ENCODE measurements at regions of chr3 and their contacts with region 1.

Region 1: DNA sequence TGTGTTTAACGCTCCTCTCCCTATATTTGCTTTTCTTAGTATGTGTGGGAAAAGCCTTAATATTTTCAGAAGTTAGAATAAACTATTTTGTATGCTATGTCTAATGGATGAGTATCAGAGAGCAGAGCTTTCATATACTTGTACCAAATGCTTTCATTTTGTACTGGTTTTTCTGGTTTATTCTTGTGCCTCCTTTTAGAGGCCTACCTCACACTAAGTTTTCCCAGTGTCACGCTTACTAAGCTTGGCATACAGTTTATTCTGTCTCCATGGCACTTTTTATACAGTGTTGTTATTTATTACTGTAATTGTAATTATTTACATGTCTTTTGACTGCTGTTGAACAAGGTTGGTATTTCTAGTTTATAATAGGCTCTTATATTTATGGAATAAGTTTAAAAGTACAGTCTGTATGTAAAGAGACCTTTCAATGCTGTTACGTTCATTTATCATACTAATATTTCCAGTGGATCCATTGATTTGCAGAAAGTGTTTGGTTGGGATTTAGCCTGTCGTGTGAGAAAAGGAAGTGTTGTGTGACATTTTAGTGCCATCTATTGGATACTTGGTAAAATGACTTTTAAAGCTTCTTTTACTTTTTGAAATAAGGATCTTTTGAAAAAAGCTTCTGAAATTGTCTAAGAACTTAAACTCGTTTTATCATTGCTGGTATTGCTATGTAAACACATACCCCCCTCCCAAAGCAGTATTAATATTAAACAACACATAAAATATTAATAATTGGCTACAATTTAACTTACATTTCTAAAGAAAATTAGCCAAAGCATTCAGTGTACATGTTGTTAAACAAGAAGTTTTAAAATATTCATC is 5.2 kb upstream of the EBLN2 start:
- DNase-seq: no peak
- H3K4me3 ChIP-seq: no peak overlapping the region
- H3K27me3 ChIP-seq: no peaks in the 10 kb centered on the region
- CTCF ChIP-seq: peak; percentile 45

Region 2: GRCh38 chr3:72938471-72939265 is 117.6 kb before region 1 on chr3:
- CTCF ChIA-PET with region 1: interaction called, 24 read pairs
- POLR2A ChIA-PET with region 1: no interaction called
- DNase-seq: peak; percentile 90
- H3K4me3 ChIP-seq: no peak overlapping the region
- H3K27me3 ChIP-seq: no peaks in the 10 kb centered on the region
- CTCF ChIP-seq: peak; percentile 67

Region 3: DNA sequence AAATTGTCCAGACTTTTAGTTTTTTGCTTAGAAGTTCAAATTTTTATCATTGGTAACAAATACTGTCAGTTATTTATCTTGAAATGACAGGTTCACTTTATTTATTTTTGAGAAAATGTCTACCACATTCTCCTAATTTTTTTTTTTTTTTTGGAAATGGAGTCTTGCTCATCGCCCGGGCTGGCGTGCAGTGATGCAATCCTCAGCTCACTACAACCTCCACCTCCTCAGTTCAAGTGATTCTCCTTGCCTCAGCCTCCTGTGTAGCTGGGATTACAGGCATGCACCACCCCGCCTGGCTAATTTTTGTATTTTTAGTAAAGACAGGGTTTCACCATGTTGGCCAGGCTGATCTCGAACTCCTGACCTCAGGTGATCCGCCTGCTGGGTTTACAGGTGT is 10.8 kb before region 1 on chr3:
- CTCF ChIA-PET with region 1: interaction called, 10 read pairs
- POLR2A ChIA-PET with region 1: no interaction called
- DNase-seq: no peak
- H3K4me3 ChIP-seq: no peak overlapping the region
- H3K27me3 ChIP-seq: no peaks in the 10 kb centered on the region
- CTCF ChIP-seq: no peak